Dendritic cell treated with granulocyte-macrophage colony-stimulating factor and Interleukin-4, amounts not matched to agents 40 ng/mL and 50 ng/mL, for 4 days (primary cell): ENCODE measurements at regions of chr12 and their contacts with region 1.

Region 1: DNA sequence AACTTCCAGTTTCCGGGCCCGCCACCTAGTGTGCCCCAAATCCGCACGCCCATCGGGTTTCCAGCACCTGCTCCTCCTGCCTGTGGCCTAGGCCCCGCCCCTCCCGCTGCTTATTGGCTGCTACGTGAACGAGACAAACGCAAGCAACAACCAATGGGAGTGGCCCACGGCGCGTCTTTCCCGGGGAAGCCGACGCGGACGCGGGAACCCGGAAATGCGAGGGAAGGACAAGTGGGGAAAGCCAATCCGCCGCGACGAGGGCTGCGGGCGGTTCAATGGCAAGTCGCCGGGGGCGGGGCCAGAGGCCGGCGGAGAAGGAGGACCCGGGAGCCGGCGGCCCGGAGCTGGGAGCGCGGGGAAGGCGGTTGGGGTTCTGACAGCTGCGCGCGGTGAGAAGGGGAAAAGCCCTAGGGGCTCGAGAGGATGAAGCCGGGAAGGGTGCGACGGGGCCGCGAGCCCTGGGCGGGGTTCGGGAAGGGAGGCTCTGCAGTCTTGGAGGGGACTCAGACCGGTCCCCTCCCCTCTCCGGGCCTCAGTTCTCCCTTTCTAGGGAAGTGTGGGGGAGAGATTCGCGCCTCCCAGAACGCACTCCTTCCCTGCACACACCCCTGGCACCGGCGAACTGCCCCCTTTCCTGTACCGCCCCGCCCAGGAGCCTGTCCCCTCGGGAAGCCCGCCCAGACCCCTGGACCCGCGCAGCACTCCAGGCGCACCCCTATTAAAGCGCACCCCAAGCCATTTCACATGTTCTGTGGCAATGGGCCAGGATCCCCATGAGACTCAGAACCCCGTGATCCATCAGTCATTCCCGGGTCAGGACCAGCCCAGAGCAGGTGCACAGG is at the start of gene FICD:
- H3K4me3 Mint-ChIP-seq: peak within 1 kb of the TSS; percentile 88
- H3K27ac Mint-ChIP-seq: peak within 1 kb of the TSS; percentile 88
- H3K4me1 Mint-ChIP-seq: peaks cover 35% of the 10 kb centered on the region
- H3K27me3 Mint-ChIP-seq: peaks cover 6% of the 10 kb centered on the region

Region 2: DNA sequence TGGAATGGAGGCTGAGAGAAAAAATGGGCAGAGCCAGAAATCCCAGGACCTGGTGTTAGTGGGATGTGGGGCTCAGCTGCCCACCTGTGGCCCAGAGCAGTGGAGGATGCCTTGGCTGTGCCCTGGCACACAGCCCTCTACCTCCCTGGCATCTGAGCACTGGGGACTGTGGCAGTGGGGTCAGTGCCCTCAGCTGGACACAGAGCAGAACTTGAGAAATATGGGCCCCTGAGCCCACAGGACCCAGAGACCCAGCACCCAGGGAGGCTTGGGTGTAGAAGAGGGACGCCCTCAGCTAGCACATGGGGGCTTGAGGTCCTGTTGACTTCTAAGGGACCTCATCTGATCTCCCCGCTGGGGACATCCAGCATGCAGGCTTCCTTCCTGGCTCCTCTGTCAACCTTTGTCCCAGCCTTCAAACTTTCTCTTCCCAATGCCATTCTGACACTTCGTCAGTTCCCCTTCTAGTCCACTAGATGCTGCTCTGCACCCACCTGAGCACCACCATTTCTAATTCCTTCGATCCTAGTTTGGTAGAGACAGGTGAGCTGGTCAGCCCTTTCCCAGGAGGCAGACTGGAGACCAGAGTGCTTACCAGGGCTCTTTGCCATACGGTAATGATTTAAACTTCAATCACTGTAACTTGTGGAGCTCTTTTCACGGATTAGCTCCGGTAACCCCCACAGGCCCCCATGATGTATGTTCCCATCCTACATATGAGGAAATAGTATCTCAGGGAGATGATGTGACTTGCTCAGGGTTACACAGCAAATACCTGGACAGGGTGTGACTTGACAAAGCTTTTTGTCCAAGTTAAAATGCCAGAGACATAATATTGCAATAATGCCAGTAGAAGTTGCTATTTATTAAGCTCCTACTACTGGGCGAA is 597.0 kb before region 1 on chr12:
- intact Hi-C with region 1: loop called (anchors 5 kb)
- H3K4me3 Mint-ChIP-seq: no peak overlapping the region
- H3K27ac Mint-ChIP-seq: no peak overlapping the region
- H3K4me1 Mint-ChIP-seq: no peaks in the 10 kb centered on the region
- H3K27me3 Mint-ChIP-seq: peaks cover 38% of the 10 kb centered on the region

Region 3: GRCh38 chr12:108063192-108063591 is 452.0 kb before region 1 on chr12:
- intact Hi-C with region 1: loop called (anchors 1 kb)
- H3K4me3 Mint-ChIP-seq: no peak overlapping the region
- H3K27ac Mint-ChIP-seq: no peak overlapping the region
- H3K4me1 Mint-ChIP-seq: no peaks in the 10 kb centered on the region
- H3K27me3 Mint-ChIP-seq: peaks cover 18% of the 10 kb centered on the region

Region 4: GRCh38 chr12:108234158-108234557 is 281.0 kb before region 1 on chr12:
- intact Hi-C with region 1: loop called (anchors 5 kb)
- H3K4me3 Mint-ChIP-seq: no peak overlapping the region
- H3K27ac Mint-ChIP-seq: no peak overlapping the region
- H3K4me1 Mint-ChIP-seq: no peaks in the 10 kb centered on the region
- H3K27me3 Mint-ChIP-seq: peaks cover 41% of the 10 kb centered on the region